ENCODE measurements at regions of chr14 and their contacts with region 1.

Region 1: DNA sequence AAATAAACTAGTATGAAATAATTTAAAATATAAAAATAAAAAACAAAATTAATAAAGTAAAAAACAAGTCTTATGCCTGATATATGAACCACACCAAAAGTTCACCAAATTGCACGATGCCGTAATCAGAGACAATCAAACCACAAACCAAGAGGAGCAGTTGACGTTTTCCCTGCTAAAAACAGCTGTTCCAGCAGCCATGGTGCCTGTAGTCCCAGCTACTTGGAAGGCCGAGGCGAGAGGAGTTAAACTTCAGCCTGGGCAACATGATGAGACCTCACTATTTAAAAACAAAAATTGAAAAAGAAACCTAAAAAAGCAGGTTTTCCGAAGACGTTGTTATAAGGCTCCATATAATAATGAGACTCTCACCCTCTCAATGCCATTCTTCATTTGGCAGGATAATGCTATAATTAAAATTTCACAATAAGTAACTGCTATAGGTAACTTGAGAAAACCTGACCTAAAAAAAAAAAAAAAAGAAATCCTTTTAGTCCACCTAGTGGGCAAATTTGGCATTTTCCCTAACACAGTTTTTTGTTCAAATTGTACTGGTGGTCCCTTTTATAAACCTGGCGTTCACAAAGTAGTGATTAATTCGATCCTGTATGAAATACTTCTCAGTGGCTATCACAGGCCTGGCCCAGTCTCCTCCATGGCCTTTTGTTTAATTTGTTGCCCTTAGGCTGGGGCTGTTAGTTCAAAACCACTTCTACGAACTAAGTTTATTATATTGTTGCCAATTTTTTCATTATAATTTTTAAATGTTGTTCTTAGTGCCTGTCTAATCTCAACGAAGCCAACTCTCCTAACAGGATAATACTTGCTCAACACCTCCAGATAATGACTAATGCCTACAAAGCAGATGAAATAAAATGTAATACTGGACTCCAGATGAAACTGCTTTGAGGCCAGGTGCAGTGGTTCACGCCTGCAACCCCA is 62.1 kb downstream of the TNFAIP2 start:
- DNase-seq: peak in 1 of 2 donors; percentile 65
- H3K4me3 ChIP-seq: no peak overlapping the region
- H3K27ac ChIP-seq: peak overlapping the region in 2 of 5 donors; percentile 8 to 19
- H3K4me1 ChIP-seq: peaks cover 10 to 34% (median 21%) of the 10 kb centered on the region in 4 donors
- H3K27me3 ChIP-seq: peaks cover 0 to 42% (median 11%) of the 10 kb centered on the region in 3 donors
- CTCF ChIP-seq: peak in 5 of 7 experiments; percentile 40 to 79 (median 63)
- EP300 ChIP-seq: no peak
- POLR2A ChIP-seq: no peak

Region 2: DNA sequence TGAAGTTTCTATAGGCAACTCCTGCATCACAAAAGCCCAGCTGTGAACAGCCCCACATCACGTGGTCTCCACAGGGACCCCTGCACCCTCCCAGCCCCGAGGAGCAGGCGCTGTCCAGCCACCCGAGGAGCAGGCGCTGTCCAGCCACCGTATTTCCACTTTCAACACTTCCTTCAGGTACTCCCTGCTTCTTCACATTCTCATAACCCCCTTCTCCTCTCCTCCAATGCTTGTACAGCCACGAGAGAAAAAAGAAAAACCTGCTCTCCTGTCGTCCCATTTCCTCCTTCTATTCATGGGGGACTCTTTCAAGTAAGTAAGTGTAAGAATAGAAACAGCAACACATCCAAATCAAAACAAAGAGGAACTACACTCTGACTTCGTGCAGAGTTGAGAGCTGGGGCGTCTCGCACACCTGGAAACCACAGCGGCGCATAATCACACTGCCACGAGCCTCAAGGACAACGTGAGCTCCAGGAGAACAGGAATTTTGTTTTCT is 139.9 kb before region 1 on chr14:
- intact Hi-C with region 1: no loop called
- DNase-seq: peak in 1 of 2 donors; percentile 58
- H3K4me3 ChIP-seq: no peak overlapping the region
- H3K27ac ChIP-seq: peak overlapping the region in 1 of 5 donors; percentile 18
- H3K4me1 ChIP-seq: peaks cover 17 to 57% (median 37%) of the 10 kb centered on the region in 4 donors
- H3K27me3 ChIP-seq: no peaks in the 10 kb centered on the region
- CTCF ChIP-seq: no peak
- EP300 ChIP-seq: no peak
- POLR2A ChIP-seq: no peak

Region 3: DNA sequence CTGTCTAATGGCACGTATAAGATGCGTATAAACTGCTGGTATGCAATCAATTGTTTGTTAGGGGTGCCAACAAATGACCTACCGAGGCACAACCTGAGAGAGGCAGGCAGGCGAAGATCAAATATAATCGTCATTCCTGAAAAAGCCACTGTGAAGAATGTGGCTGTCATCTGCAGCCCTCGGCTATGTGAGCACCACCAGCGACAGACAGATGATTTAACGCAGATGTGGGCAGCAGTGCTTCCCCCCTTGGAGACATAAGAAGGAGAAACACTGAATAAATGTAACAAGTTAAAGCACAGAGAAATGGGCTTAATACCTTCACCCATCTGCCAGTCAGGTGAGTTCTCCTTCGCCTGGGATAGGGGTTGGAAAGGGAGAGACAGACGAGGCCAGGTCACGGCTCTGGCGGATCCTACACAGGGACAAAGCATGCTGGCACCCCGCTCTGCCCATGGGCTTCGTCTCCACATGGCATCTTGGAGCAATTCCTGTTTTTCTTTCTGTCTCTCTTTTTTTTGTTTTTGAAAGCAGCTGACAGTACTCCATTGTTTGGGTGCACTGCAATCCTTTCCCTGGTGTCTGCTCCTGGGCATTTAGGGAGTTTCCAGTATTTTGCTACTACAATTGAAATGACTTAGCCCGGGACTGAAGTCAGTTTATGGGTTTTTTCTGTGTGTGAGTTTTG is 33.9 kb before region 1 on chr14:
- intact Hi-C with region 1: no loop called
- DNase-seq: no peak
- H3K4me3 ChIP-seq: no peak overlapping the region
- H3K27ac ChIP-seq: no peak overlapping the region
- H3K4me1 ChIP-seq: peaks cover 0 to 7% (median 0%) of the 10 kb centered on the region in 4 donors
- H3K27me3 ChIP-seq: peaks cover 0 to 11% (median 0%) of the 10 kb centered on the region in 3 donors
- CTCF ChIP-seq: no peak
- EP300 ChIP-seq: no peak
- POLR2A ChIP-seq: no peak

Region 4: DNA sequence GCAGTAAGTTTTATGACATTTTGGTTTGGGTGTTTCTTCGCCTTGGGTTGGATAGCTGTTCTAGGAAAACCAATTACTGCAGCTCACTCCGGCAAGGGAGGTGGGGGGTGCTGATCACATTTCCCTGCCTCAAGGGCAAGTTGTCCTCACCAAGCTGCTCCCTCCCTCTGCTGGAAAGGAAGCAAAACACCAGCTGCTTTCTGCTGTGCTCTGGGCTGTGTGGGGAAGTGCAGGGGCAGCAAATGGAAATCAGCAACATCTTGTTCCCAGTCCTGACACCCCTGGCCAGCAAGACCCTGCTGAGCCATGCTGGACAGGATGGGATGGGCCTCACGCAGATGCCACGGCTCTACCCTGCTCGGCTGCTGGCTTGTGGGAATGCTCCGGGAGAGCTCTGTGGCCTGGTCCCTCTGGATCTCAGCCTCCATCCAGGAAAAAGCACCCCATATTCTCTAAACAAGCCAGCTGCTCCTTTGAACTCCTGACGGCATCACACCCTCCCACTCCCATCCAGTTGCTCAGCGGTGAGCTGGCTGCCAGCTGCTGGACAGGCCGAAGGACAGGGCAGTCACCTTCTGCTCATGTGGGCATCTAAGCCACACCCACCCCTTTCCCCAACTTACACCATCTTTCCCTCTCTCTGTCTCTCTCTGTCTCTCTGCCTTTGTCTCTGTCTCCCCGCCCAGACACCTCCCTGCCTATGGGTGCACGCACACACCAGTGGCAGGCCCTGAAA is 96.3 kb after region 1 on chr14:
- intact Hi-C with region 1: loop called (anchors 10 kb)
- DNase-seq: peak; percentile 60 to 80
- H3K4me3 ChIP-seq: no peak overlapping the region
- H3K27ac ChIP-seq: peak overlapping the region in 1 of 5 donors; percentile 53
- H3K4me1 ChIP-seq: peaks cover 11 to 27% (median 17%) of the 10 kb centered on the region in 4 donors
- H3K27me3 ChIP-seq: peaks cover 0 to 72% (median 23%) of the 10 kb centered on the region in 3 donors
- CTCF ChIP-seq: peak in 4 of 7 experiments; percentile 6 to 59 (median 38)
- EP300 ChIP-seq: no peak
- POLR2A ChIP-seq: no peak

Measured in stomach (tissue), 19 donors.